Calu3 (cell line): ENCODE measurements at regions of chr17 and their contacts with region 1.

Region 1: DNA sequence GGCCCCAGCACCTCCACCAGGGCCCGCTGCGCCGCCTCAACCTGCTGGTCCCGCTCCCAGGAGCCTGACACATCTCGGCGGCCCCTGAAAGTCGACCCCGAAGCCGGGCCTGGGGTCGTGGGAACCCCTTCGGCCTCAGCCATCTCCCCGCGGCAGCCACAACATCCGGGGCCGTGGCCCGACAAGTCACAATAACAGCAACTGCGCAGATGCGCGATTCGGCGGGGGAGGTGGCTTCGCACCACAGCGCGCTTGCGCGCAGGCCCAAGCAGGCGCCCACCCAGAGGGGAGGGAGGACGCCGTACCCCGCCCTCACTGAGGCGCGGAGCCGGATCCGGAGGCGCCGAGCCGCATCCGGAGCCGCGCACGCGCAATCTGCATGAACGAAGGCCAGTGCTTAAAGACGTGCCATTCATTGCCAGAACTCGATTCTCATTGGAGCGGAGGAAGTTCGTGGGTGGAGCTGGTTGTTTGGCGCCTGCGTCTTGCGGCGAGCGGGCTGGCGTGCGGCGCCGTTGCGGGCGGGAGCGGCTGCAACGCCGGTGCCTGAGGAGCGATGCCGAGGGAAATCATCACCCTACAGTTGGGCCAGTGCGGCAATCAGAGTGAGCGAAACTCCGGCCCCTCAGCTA is at the starts of genes RETREG3 and TUBG1:
- DNase-seq: peak; percentile 100
- H3K4me3 Mint-ChIP-seq: peak within 1 kb of the TSS; percentile 88
- H3K27ac Mint-ChIP-seq: peak within 1 kb of the TSS; percentile 75
- H3K4me1 Mint-ChIP-seq: no peaks in the 10 kb centered on the region
- H3K27me3 Mint-ChIP-seq: no peaks in the 10 kb centered on the region
- CTCF ChIP-seq: no peak
- total RNA-seq, gene RETREG3: 71.2 and 80.6 TPM in 2 replicates
- total RNA-seq, gene TUBG1: 130 and 133 TPM in 2 replicates

Region 2: GRCh38 chr17:42744806-42745617 is 135.7 kb after region 1 on chr17 and contains the start of gene EZH1:
- CTCF ChIA-PET with region 1: no interaction called
- intact Hi-C with region 1: no loop called
- DNase-seq: peak; percentile 98
- H3K4me3 Mint-ChIP-seq: peak within 1 kb of the TSS; percentile 87
- H3K27ac Mint-ChIP-seq: peak within 1 kb of the TSS; percentile 86
- H3K4me1 Mint-ChIP-seq: peaks cover 9% of the 10 kb centered on the region
- H3K27me3 Mint-ChIP-seq: peaks cover 30% of the 10 kb centered on the region
- CTCF ChIP-seq: no peak
- total RNA-seq, gene EZH1: 43.3 and 45.5 TPM in 2 replicates

Region 3: DNA sequence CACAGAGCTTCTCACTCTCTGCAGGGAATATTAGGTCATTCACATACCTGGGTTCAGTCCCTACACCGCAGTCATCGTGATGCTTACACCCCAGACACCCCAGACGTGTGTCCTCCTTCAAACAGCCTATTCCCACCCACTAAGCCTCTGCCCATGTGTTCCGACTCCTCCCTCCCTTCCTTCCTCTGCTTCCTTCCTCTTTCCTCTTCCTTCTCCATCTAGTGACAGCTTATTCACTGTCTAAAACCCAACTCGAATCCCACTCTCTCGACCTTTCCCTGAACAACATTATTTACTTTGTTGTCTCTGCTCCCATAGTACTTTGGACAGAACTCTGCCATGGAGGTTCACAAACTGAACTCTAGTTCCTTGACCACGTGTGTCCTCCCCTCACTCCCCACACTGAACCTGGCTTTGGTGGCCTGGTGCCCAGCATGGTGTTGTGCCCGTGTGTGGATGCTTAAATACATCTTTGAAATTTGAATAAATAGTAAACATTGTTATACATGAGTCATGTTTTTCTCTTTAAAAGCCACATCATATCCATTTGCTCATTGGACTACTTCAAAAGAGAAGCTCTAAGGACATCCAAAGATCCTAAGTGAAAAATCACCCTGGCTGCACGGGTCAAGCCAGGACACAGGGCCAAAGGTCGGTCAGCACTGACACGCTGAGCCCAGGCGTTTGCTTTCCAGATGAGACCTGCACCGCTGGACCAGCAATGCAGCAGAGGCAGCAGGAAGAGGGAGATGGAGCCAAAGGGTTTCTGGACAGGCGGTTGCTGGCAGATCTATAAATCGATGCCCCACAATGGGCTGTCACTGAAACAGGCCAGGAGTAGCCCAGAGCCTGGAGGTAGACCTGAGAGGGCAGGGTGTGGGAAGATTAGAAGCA is 277.2 kb after region 1 on chr17:
- CTCF ChIA-PET with region 1: interaction called, 12 read pairs
- intact Hi-C with region 1: no loop called
- DNase-seq: no peak
- H3K4me3 Mint-ChIP-seq: no peak overlapping the region
- H3K27ac Mint-ChIP-seq: no peak overlapping the region
- H3K4me1 Mint-ChIP-seq: no peaks in the 10 kb centered on the region
- H3K27me3 Mint-ChIP-seq: peaks cover 13% of the 10 kb centered on the region
- CTCF ChIP-seq: no peak